ENCODE measurements at regions of chr22 and their contacts with region 1.

Region 1: DNA sequence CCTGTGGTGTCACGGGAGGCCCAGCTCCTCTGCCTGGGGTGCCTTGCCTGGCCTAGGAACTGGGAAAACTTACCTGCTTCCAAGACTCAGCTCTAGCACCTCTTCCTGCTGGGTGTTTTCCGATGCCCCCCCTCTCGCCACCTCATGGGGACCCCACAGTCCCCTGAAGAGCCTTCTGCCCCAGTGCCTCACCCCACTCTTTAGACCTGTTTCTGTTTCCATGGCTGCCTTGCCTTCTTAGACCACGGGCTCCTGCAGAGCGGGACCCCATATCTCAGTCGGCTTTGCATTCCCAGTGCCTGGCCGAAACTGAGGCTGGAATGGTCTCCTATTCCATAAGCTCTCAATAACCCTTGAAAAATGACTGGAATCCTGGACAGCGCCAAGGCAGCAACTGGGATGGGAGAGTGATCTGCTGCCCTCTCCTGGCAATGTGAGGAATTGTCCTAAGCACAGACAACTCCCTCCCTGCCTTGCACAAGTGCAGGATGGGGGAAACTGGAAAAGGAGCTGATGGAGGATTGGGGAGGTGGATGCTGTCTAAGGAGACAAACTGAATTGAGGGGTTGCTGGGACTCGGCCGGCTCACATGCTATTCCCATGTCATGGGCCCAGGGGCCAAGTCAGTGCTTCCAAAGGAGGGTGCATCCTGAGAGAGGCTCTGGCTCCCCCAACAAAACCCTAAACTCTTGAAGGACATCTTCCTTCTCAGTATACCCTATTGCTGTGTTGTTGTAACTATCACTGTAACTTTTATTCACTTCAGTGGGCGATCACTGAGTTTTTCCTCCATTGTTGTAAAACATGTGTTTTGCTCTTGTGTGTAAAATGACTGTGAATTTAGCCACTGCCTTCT is 26.6 kb upstream of the IL17RA start:
- DNase-seq: peak; percentile 53 to 70 (median 61)
- ATAC-seq: peak; percentile 72 to 80
- H3K4me3 ChIP-seq: no peak overlapping the region
- H3K27ac ChIP-seq: no peak overlapping the region
- H3K4me1 ChIP-seq: no peaks in the 10 kb centered on the region
- H3K27me3 ChIP-seq: no peaks in the 10 kb centered on the region

Region 2: GRCh38 chr22:16917144-16918003 is 140.8 kb before region 1 on chr22:
- intact Hi-C with region 1: loop called in 2 of 4 experiments (anchors 2 to 5 kb)
- DNase-seq: peak; percentile 53 to 85 (median 64)
- ATAC-seq: peak; percentile 43 to 71
- H3K4me3 ChIP-seq: no peak overlapping the region
- H3K27ac ChIP-seq: no peak overlapping the region
- H3K4me1 ChIP-seq: no peaks in the 10 kb centered on the region
- H3K27me3 ChIP-seq: no peaks in the 10 kb centered on the region

Region 3: GRCh38 chr22:16932577-16932976 is 125.6 kb before region 1 on chr22:
- intact Hi-C with region 1: loop called in 2 of 4 experiments (anchors 5 to 10 kb)
- DNase-seq: no peak
- ATAC-seq: no peak
- H3K4me3 ChIP-seq: no peak overlapping the region
- H3K27ac ChIP-seq: no peak overlapping the region
- H3K4me1 ChIP-seq: no peaks in the 10 kb centered on the region
- H3K27me3 ChIP-seq: peaks cover 2% of the 10 kb centered on the region

Measured in right cardiac atrium (tissue), 5 donors.